Left lung (tissue), 14 donors: ENCODE measurements at regions of chr15 and their contacts with region 1.

Region 1: GRCh38 chr15:66946578-66947164 is 118.7 kb upstream of the SMAD3 start:
- DNase-seq: peak; percentile 58 to 86 (median 69)
- ATAC-seq: peak; percentile 90
- H3K4me3 ChIP-seq: no peak overlapping the region
- H3K27ac ChIP-seq: no peak overlapping the region
- H3K4me1 ChIP-seq: peaks cover 0 to 3% of the 10 kb centered on the region in 2 donors
- H3K27me3 ChIP-seq: peaks cover 0 to 6% of the 10 kb centered on the region in 2 donors
- CTCF ChIP-seq: peak; percentile 92 to 93

Region 2: GRCh38 chr15:67303490-67304363 is 357.1 kb after region 1 on chr15:
- intact Hi-C with region 1: loop called in 1 of 2 experiments (anchors 10 kb)
- DNase-seq: peak in 1 of 4 donors; percentile 23
- ATAC-seq: peak; percentile 72
- H3K4me3 ChIP-seq: no peak overlapping the region
- H3K27ac ChIP-seq: no peak overlapping the region
- H3K4me1 ChIP-seq: no peaks in the 10 kb centered on the region
- H3K27me3 ChIP-seq: no peaks in the 10 kb centered on the region
- CTCF ChIP-seq: peak in 1 of 2 donors; percentile 37

Region 3: GRCh38 chr15:67433495-67434099 is 486.9 kb after region 1 on chr15:
- intact Hi-C with region 1: loop called in 1 of 2 experiments (anchors 10 kb)
- DNase-seq: peak in 1 of 4 donors; percentile 55
- ATAC-seq: peak; percentile 95
- H3K4me3 ChIP-seq: no peak overlapping the region
- H3K27ac ChIP-seq: no peak overlapping the region
- H3K4me1 ChIP-seq: no peaks in the 10 kb centered on the region
- H3K27me3 ChIP-seq: no peaks in the 10 kb centered on the region
- CTCF ChIP-seq: peak; percentile 68 to 74